ENCODE measurements at regions of chr6 and their contacts with region 1.

Region 1: GRCh38 chr6:82363351-82364086 is at the start of gene TPBG:
- DNase-seq: peak; percentile 77
- H3K4me3 Mint-ChIP-seq: peak within 1 kb of the TSS; percentile 83
- H3K27ac Mint-ChIP-seq: peak within 1 kb of the TSS; percentile 66
- H3K4me1 Mint-ChIP-seq: peaks cover 9% of the 10 kb centered on the region
- H3K27me3 Mint-ChIP-seq: no peaks in the 10 kb centered on the region
- CTCF ChIP-seq: peak; percentile 21
- total RNA-seq, gene TPBG: 42.6 and 46.5 TPM in 2 replicates

Region 2: GRCh38 chr6:82270881-82271645 is 92.5 kb before region 1 on chr6:
- CTCF ChIA-PET with region 1: interaction called, 3 read pairs
- intact Hi-C with region 1: loop called (anchors 5 kb)
- DNase-seq: no peak
- H3K4me3 Mint-ChIP-seq: no peak overlapping the region
- H3K27ac Mint-ChIP-seq: no peak overlapping the region
- H3K4me1 Mint-ChIP-seq: no peaks in the 10 kb centered on the region
- H3K27me3 Mint-ChIP-seq: no peaks in the 10 kb centered on the region
- CTCF ChIP-seq: no peak

Region 3: GRCh38 chr6:82397962-82398692 is 34.6 kb after region 1 on chr6:
- CTCF ChIA-PET with region 1: interaction called, 5 read pairs
- intact Hi-C with region 1: loop called (anchors 2 kb)
- DNase-seq: no peak
- H3K4me3 Mint-ChIP-seq: peak overlapping the region; percentile 9
- H3K27ac Mint-ChIP-seq: peak overlapping the region; percentile 87
- H3K4me1 Mint-ChIP-seq: peaks cover 34% of the 10 kb centered on the region
- H3K27me3 Mint-ChIP-seq: no peaks in the 10 kb centered on the region
- CTCF ChIP-seq: no peak

Region 4: GRCh38 chr6:82525775-82526537 is 162.4 kb after region 1 on chr6:
- CTCF ChIA-PET with region 1: no interaction called
- intact Hi-C with region 1: loop called (anchors 10 kb)
- DNase-seq: no peak
- H3K4me3 Mint-ChIP-seq: no peak overlapping the region
- H3K27ac Mint-ChIP-seq: no peak overlapping the region
- H3K4me1 Mint-ChIP-seq: no peaks in the 10 kb centered on the region
- H3K27me3 Mint-ChIP-seq: no peaks in the 10 kb centered on the region
- CTCF ChIP-seq: no peak

Measured in Calu3 (cell line).